Endothelial cell of umbilical vein (primary cell): ENCODE measurements at regions of chr12 and their contacts with region 1.

Region 1: GRCh38 chr12:11648831-11649702 is at the start of gene ETV6:
- DNase-seq: peak; percentile 89
- H3K4me3 ChIP-seq: peak within 1 kb of the TSS; percentile 91 to 100 (median 92)
- H3K27ac ChIP-seq: peak within 1 kb of the TSS; percentile 100
- H3K4me1 ChIP-seq: peaks cover 17% of the 10 kb centered on the region
- H3K27me3 ChIP-seq: no peaks in the 10 kb centered on the region
- CTCF ChIP-seq: no peak
- POLR2A ChIP-seq: peak; percentile 71
- total RNA-seq, gene ETV6: 56.1 and 57.1 TPM in 2 replicates

Region 2: DNA sequence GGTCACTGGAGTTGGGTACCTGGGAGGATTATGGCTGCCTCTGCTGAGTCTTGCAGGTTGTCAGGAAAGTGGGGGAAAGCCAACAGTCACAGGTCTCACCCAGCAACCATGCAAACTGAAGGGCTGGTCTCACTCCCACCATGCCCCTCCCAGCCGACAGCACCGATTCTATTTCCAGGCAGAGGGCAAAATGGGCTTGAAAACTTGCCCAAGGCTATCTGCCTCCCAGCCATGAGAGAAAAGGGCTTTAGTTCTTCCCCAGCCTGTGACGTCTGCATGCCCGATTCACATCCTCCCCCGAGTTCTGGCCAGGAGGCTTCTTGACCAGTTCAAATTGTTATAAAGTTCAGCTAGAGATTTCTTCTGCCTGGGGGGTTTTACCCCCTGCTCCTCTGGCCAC is 504.8 kb before region 1 on chr12:
- CTCF ChIA-PET with region 1: no interaction called
- POLR2A ChIA-PET with region 1: no interaction called
- dilution Hi-C with region 1: no loop called
- intact Hi-C with region 1: no loop called
- DNase-seq: no peak
- H3K4me3 ChIP-seq: no peak overlapping the region
- H3K27ac ChIP-seq: no peak overlapping the region
- H3K4me1 ChIP-seq: no peaks in the 10 kb centered on the region
- H3K27me3 ChIP-seq: no peaks in the 10 kb centered on the region
- CTCF ChIP-seq: no peak
- POLR2A ChIP-seq: no peak

Region 3: GRCh38 chr12:11581179-11581755 is 67.8 kb before region 1 on chr12:
- CTCF ChIA-PET with region 1: interaction called, 10 read pairs
- POLR2A ChIA-PET with region 1: interaction called, 10 read pairs
- dilution Hi-C with region 1: no loop called
- intact Hi-C with region 1: loop called (anchors 1 kb)
- DNase-seq: peak; percentile 65
- H3K4me3 ChIP-seq: no peak overlapping the region
- H3K27ac ChIP-seq: no peak overlapping the region
- H3K4me1 ChIP-seq: peaks cover 8% of the 10 kb centered on the region
- H3K27me3 ChIP-seq: no peaks in the 10 kb centered on the region
- CTCF ChIP-seq: peak in 1 of 2 donors; percentile 16
- POLR2A ChIP-seq: no peak

Region 4: GRCh38 chr12:11719678-11720099 is 70.6 kb after region 1 on chr12:
- CTCF ChIA-PET with region 1: interaction called, 3 read pairs
- POLR2A ChIA-PET with region 1: no interaction called
- dilution Hi-C with region 1: no loop called
- intact Hi-C with region 1: loop called (anchors 1 kb)
- DNase-seq: peak; percentile 94
- H3K4me3 ChIP-seq: no peak overlapping the region
- H3K27ac ChIP-seq: peak overlapping the region; percentile 95
- H3K4me1 ChIP-seq: peaks cover 60% of the 10 kb centered on the region
- H3K27me3 ChIP-seq: no peaks in the 10 kb centered on the region
- CTCF ChIP-seq: no peak
- POLR2A ChIP-seq: peak; percentile 21

Region 5: GRCh38 chr12:11758510-11759493 is 109.7 kb after region 1 on chr12:
- CTCF ChIA-PET with region 1: no interaction called
- POLR2A ChIA-PET with region 1: no interaction called
- dilution Hi-C with region 1: no loop called
- intact Hi-C with region 1: no loop called
- DNase-seq: peak; percentile 51
- H3K4me3 ChIP-seq: no peak overlapping the region
- H3K27ac ChIP-seq: no peak overlapping the region
- H3K4me1 ChIP-seq: peaks cover 11% of the 10 kb centered on the region
- H3K27me3 ChIP-seq: no peaks in the 10 kb centered on the region
- CTCF ChIP-seq: no peak
- POLR2A ChIP-seq: no peak

Region 6: DNA sequence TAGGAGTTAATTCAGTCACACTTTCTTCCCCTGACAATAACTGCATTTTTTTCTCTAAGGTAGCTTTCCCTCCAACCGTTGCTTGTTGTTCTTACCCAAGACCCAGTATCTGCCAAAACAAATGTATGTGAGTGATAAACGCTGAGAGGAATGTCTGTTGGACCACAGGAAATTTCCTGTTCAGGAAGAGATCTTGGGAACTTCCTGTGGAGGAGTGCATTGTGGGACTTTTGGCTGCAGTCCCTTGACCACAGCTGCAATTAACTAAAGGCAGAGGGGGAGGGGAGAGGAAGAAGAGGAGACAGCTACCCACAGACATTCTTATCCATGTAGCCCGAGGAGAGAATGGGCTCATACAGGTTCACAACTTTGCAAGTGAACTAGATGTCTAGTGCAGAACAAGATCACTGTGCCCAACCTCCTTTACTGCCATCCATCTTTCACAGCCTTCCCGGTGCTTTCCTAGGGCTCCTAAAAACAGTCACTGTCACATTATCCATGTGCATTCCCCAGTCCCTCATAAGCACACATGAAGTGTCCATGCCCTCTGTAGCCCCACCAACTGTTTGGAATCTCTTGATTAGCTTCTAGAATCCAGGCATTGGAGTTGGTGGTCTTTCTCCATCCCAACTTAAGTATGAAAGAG is 149.9 kb after region 1 on chr12:
- CTCF ChIA-PET with region 1: interaction called, 4 read pairs
- POLR2A ChIA-PET with region 1: interaction called, 10 read pairs
- dilution Hi-C with region 1: no loop called
- intact Hi-C with region 1: loop called (anchors 1 kb)
- DNase-seq: peak; percentile 98
- H3K4me3 ChIP-seq: no peak overlapping the region
- H3K27ac ChIP-seq: peak overlapping the region; percentile 99
- H3K4me1 ChIP-seq: peaks cover 75% of the 10 kb centered on the region
- H3K27me3 ChIP-seq: no peaks in the 10 kb centered on the region
- CTCF ChIP-seq: no peak
- POLR2A ChIP-seq: peak; percentile 84

Region 7: GRCh38 chr12:11862798-11863197 is 213.7 kb after region 1 on chr12:
- CTCF ChIA-PET with region 1: no interaction called
- POLR2A ChIA-PET with region 1: no interaction called
- dilution Hi-C with region 1: no loop called
- intact Hi-C with region 1: loop called (anchors 1 kb)
- DNase-seq: peak; percentile 69
- H3K4me3 ChIP-seq: no peak overlapping the region
- H3K27ac ChIP-seq: peak overlapping the region; percentile 98
- H3K4me1 ChIP-seq: peaks cover 42% of the 10 kb centered on the region
- H3K27me3 ChIP-seq: no peaks in the 10 kb centered on the region
- CTCF ChIP-seq: no peak
- POLR2A ChIP-seq: no peak

Region 8: GRCh38 chr12:11958221-11959091 is 309.4 kb after region 1 on chr12:
- CTCF ChIA-PET with region 1: no interaction called
- POLR2A ChIA-PET with region 1: no interaction called
- dilution Hi-C with region 1: no loop called
- intact Hi-C with region 1: loop called (anchors 5 kb)
- DNase-seq: peak; percentile 83
- H3K4me3 ChIP-seq: no peak overlapping the region
- H3K27ac ChIP-seq: peak overlapping the region; percentile 95
- H3K4me1 ChIP-seq: peaks cover 19% of the 10 kb centered on the region
- H3K27me3 ChIP-seq: peaks cover 0 to 14% of the 10 kb centered on the region in 2 experiments
- CTCF ChIP-seq: no peak
- POLR2A ChIP-seq: no peak